Activated T-helper 2 cell treated with anti-CD3 and anti-CD28 coated beads, Interferon-gamma antibody, Interleukin-2, Interleukin-4, amounts not matched to agents 10 μg/mL and 5 μg/mL and 100 μg/mL, durations not matched to agents 14 hours and 24 hours and 36 hours (primary cell): ENCODE measurements at regions of chr18 and their contacts with region 1.

Region 1: GRCh38 chr18:35240664-35241447 is at the start of gene ZNF397:
- DNase-seq: peak; percentile 94
- H3K4me3 Mint-ChIP-seq: peak within 1 kb of the TSS; percentile 94
- H3K27ac Mint-ChIP-seq: peak within 1 kb of the TSS; percentile 98
- H3K4me1 Mint-ChIP-seq: peaks cover 11% of the 10 kb centered on the region
- H3K27me3 Mint-ChIP-seq: no peaks in the 10 kb centered on the region
- total RNA-seq, gene ZNF397: 14.6 and 18.4 TPM in 2 replicates

Region 2: DNA sequence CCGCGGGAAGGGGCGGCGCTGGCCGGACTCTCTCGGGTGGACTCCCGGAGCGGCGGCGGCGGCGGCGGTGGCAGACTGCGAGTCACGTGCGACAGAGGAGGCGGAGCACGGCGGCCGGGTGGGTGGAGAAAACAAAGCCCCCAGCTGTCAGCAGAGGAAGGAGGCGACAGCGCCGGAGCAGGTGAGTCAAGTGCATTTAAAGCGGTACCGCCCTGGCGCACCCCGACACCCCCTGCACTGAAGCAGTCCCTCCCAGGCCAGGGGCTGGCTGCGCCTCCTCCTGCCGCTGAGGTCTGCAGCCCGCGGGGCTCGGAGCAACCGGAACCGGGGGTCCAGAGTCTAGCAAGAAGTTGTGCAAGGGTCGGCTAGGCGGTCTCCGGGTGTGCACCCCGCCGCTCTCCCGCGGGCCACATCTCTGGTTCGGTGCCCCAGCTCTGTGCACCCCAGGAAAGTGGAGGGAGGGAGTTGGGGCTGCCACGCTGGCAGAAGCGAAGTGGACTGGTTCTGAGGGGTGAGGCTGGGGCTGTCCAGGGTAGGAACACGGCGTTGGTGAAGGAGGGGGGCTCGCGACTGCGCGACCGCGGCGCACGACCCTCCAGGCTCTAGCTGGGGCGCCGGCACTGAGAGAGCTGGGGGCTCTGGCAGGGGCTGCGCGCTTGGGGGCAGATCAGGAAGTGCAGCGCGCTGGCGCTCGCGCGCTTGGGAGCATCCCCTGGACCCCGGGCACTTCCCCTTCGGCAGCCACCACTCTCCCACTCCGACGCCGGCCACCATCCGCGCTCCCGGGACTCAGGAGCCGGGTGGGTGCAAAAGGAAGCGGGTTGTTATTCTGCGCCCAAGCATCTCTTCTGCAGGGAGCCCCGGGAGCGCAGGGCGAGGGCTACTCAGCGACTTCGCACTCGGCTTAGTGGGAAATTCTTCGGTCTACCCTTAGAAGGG is 263.7 kb before region 1 on chr18:
- intact Hi-C with region 1: loop called (anchors 2 kb)
- DNase-seq: peak; percentile 62
- H3K4me3 Mint-ChIP-seq: peak overlapping the region; percentile 81
- H3K27ac Mint-ChIP-seq: no peak overlapping the region
- H3K4me1 Mint-ChIP-seq: peaks cover 25% of the 10 kb centered on the region
- H3K27me3 Mint-ChIP-seq: peaks cover 37% of the 10 kb centered on the region

Region 3: DNA sequence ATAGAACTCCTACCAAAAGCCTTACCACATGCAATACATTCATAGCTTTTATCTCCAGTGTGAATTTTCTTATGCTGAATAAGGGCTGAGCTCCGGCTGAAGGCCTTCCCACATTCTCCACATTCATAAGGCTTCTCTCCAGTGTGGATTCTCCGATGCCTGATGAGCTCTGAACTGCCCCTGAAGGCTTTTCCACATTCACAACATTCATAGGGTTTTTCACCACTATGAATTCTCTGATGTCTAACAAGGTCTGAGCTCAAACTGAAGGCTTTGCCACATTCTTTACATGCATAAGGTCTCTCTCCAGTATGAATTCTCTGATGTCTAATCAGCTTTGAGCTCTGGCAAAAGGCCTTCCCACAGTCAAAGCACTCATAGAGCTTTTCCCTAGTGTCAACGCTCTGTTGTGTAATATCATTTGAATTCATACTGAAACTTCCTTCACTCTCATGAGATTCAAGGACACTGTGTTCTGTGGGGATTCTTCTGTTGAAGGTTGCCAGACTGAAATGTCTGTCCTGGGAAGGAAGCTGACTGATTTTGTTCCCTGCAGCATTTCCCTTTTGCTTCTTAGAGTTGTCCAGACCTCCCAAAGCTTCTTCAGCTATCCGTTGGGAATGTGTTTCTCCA is 12.9 kb after region 1 on chr18:
- intact Hi-C with region 1: no loop called
- DNase-seq: no peak
- H3K4me3 Mint-ChIP-seq: no peak overlapping the region
- H3K27ac Mint-ChIP-seq: no peak overlapping the region
- H3K4me1 Mint-ChIP-seq: no peaks in the 10 kb centered on the region
- H3K27me3 Mint-ChIP-seq: no peaks in the 10 kb centered on the region

Region 4: DNA sequence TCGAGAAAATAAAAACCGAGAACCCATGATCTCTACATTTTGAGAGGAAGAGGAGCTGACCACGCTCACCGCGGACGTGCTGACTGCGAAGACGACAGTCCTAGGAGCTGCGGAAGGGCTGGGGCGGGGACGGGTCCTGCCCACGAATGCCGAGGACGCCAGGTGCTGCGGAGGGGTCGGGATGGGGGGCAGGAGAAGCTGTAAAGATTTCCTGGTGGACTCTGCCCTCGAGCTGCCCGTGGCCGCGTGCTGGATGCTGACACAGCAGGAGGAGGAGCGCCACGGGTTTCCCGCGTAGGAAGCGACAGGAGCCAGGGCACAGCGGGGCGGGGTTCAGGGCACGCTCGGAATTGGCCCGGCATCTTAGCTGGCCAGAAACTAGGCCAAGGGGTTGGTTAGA is 27.0 kb after region 1 on chr18:
- intact Hi-C with region 1: loop called (anchors 2 kb)
- DNase-seq: no peak
- H3K4me3 Mint-ChIP-seq: peak overlapping the region; percentile 14
- H3K27ac Mint-ChIP-seq: no peak overlapping the region
- H3K4me1 Mint-ChIP-seq: peaks cover 5% of the 10 kb centered on the region
- H3K27me3 Mint-ChIP-seq: no peaks in the 10 kb centered on the region

Region 5: DNA sequence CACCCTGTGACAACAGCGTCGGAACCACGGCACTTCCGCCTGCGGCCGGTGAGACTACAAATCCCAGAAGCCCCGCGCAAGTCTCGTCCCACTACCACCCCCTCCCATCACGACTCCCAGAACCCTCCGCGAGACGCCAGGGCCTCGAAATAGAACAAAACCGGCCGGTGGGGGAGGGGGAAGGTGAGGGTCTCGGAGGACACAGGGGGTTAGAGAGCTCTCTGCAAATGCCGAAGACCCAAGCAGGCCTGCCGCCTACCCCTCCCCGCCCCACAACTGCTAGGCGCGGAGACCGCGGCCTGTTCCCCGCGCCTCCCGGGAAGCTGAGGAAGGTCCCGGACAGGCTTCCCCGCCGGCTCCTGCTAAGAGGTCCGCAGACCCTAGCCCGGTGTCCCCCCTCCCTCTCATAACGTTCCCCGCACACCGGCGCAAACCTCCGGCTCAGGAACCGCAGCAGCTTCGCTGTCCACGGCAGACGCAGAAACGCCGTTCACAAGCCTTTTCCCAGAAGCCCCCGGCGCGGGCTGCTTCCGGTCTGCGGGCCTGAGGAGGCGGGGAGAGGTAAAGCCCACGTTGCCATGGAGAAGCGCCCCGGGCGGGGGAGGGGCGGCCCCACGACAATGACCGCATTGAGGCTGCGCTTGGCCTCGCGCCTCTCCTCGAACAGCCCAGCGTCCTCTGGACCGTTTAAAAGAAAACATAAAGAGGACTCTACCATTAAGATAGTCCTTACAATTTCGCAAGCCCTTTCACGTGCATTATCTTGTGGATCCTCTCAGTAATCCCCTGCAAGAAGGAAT is 103.3 kb after region 1 on chr18 and contains the start of gene ZNF24:
- intact Hi-C with region 1: loop called (anchors 1 kb)
- DNase-seq: peak; percentile 87
- H3K4me3 Mint-ChIP-seq: peak within 1 kb of the TSS; percentile 94
- H3K27ac Mint-ChIP-seq: peak within 1 kb of the TSS; percentile 83
- H3K4me1 Mint-ChIP-seq: peaks cover 24% of the 10 kb centered on the region
- H3K27me3 Mint-ChIP-seq: no peaks in the 10 kb centered on the region
- total RNA-seq, gene ZNF24: 46.0 and 51.5 TPM in 2 replicates

Region 6: GRCh38 chr18:36129300-36130038 is 888.6 kb after region 1 on chr18 and contains the starts of genes ELP2 and SLC39A6:
- intact Hi-C with region 1: loop called (anchors 5 kb)
- DNase-seq: peak; percentile 92
- H3K4me3 Mint-ChIP-seq: peak within 1 kb of the TSS; percentile 95
- H3K27ac Mint-ChIP-seq: peak within 1 kb of the TSS; percentile 93
- H3K4me1 Mint-ChIP-seq: peaks cover 47% of the 10 kb centered on the region
- H3K27me3 Mint-ChIP-seq: no peaks in the 10 kb centered on the region
- total RNA-seq, gene ELP2: 93.3 and 94.2 TPM in 2 replicates
- total RNA-seq, gene SLC39A6: 41.7 and 42.7 TPM in 2 replicates